ENCODE measurements at regions of chr9 and their contacts with region 1.

Region 1: DNA sequence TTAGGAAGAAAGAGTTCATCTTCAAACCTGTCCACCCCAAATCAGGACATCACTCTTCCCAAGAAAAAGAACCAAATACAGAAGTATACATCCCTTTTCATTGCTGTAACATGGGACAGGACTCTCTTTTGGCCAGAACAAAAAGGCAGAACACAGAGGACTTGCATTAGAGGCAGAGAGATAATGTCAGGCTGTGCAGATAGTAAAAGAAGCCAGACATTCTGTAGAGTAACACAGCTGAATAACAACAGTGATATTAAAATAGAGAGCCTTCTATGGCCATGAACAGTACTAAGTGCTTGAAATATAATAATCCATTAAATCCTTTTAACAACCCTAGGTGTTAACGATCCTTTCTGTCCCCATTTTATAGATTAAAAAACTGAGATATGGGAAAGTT is 437.2 kb downstream of the NFIB start:
- DNase-seq: no peak
- H3K4me3 ChIP-seq: no peak overlapping the region
- H3K27ac ChIP-seq: no peak overlapping the region
- H3K4me1 ChIP-seq: peaks cover 0 to 12% (median 4%) of the 10 kb centered on the region in 4 donors
- H3K27me3 ChIP-seq: no peaks in the 10 kb centered on the region
- CTCF ChIP-seq: no peak
- EP300 ChIP-seq: no peak
- POLR2A ChIP-seq: no peak

Region 2: DNA sequence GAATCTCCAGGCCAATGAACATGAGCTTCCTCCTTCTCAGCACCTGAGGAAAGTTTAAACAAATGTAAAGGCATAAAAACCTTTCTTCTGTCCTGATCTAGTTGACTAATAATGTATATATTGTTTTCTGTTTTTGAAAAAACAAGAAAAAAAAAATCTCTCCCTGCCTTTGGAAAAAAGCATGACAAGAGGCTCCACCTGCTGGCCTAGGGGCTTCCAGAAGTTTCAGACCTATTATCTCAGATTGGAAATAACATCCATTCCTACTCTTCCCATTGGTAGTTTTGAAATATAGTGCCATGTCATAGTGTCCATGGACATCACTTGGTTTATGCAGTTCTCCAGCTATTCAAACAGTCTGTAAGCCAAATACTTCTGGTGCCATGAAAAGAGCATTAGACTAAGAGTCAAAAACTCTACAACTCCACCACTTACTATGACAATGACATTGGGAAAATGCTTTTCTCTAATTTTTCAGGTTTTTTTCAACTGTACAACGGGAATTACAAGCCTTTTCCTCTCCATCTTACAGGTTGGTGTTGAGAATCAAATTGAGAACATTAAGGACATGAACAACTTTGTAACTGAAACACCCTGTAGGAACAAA is 187.6 kb before region 1 on chr9:
- in situ Hi-C with region 1: no loop called
- intact Hi-C with region 1: no loop called
- DNase-seq: no peak
- H3K4me3 ChIP-seq: no peak overlapping the region
- H3K27ac ChIP-seq: no peak overlapping the region
- H3K4me1 ChIP-seq: peaks cover 0 to 3% (median 0%) of the 10 kb centered on the region in 4 donors
- H3K27me3 ChIP-seq: no peaks in the 10 kb centered on the region
- CTCF ChIP-seq: peak in 1 of 5 experiments; percentile 23
- EP300 ChIP-seq: no peak
- POLR2A ChIP-seq: no peak

Region 3: GRCh38 chr9:13800776-13801175 is 76.0 kb before region 1 on chr9:
- in situ Hi-C with region 1: no loop called
- intact Hi-C with region 1: loop called (anchors 2 kb)
- DNase-seq: no peak
- H3K4me3 ChIP-seq: no peak overlapping the region
- H3K27ac ChIP-seq: no peak overlapping the region
- H3K4me1 ChIP-seq: no peaks in the 10 kb centered on the region
- H3K27me3 ChIP-seq: no peaks in the 10 kb centered on the region
- CTCF ChIP-seq: no peak
- EP300 ChIP-seq: no peak
- POLR2A ChIP-seq: no peak

Region 4: GRCh38 chr9:13845460-13845859 is 31.3 kb before region 1 on chr9:
- in situ Hi-C with region 1: no loop called
- intact Hi-C with region 1: no loop called
- DNase-seq: no peak
- H3K4me3 ChIP-seq: no peak overlapping the region
- H3K27ac ChIP-seq: no peak overlapping the region
- H3K4me1 ChIP-seq: no peaks in the 10 kb centered on the region
- H3K27me3 ChIP-seq: no peaks in the 10 kb centered on the region
- CTCF ChIP-seq: no peak
- EP300 ChIP-seq: no peak
- POLR2A ChIP-seq: no peak

Measured in transverse colon (tissue), 4 donors.